Dorsolateral prefrontal cortex (tissue), 120 donors: ENCODE measurements at regions of chr9 and their contacts with region 1.

Region 1: DNA sequence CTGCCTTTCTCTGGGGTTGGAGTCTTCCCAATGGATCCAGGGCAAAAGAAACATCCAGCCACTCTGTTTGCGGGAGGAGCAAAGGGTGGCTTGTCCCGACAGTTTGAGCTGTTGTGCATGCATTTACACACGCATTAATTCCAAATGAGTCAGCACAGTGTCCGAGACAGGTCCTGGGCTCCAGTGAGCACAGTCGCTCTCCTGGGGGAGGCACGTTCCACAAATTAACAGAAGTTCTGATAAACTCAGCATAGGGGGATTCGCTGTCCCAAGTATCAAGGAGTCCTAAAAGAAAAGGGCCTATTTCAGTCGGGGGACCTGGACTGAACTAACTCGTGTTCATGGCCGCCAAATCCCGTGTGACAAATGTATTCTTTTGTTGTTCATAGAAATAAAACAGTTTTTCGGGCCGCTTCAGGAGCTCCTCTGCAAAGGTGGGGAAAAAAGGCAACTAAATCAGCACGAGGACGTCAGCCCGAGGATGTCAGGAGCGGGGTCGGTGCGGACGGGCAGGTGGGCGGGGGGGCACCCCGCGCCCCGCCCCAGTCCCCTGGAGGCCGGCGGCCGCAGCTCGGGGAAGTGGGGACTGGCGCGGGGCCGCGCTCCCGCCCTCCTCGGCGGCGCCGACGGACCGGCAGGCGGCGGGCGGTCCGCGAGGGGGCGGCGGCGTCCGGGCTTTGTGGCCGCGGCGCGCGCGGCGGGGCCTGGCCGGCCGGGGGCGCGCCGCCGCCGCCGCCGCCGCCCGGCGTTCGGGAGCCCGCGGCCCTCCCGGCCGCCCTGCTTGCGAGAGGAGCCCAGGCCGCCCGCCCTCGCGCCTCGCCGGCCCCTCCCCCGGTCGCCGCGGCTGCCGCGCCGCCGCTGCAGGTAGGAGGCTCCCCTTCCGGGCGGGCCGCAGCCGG is at the start of gene MSANTD3:
- DNase-seq: peak in 8 of 10 donors; percentile 34 to 73 (median 50)
- H3K4me3 ChIP-seq: peak within 1 kb of the TSS; percentile 68 to 92 (median 83)
- H3K27ac ChIP-seq: peak within 1 kb of the TSS; percentile 43 to 93 (median 87)
- H3K27me3 ChIP-seq: peaks cover 0 to under 1% (median 0%) of the 10 kb centered on the region in 45 donors
- CTCF ChIP-seq: peak in 20 of 56 donors; percentile 8 to 46 (median 18)
- total RNA-seq, gene MSANTD3: 19.8 to 52.0 (median 34.3) TPM

Region 2: GRCh38 chr9:100352727-100353505 is 73.9 kb before region 1 on chr9 and contains the start of gene TEX10:
- intact Hi-C with region 1: loop called (anchors 2 to 5 kb)
- DNase-seq: peak; percentile 78 to 93 (median 84)
- H3K4me3 ChIP-seq: peak within 1 kb of the TSS; percentile 62 to 99 (median 91)
- H3K27ac ChIP-seq: peak within 1 kb of the TSS in 58 of 59 donors; percentile 13 to 89 (median 77)
- H3K27me3 ChIP-seq: no peaks in the 10 kb centered on the region
- CTCF ChIP-seq: peak in 26 of 56 donors; percentile 9 to 48 (median 22)
- total RNA-seq, gene TEX10: 8.5 to 18.4 (median 13.1) TPM

Region 3: GRCh38 chr9:100411472-100412283 is 15.1 kb before region 1 on chr9:
- intact Hi-C with region 1: loop called in 1 of 2 experiments (anchors 1 kb)
- DNase-seq: peak; percentile 85 to 95 (median 92)
- H3K4me3 ChIP-seq: peak overlapping the region; percentile 39 to 81 (median 63)
- H3K27ac ChIP-seq: peak overlapping the region in 23 of 59 donors; percentile 2 to 72 (median 46)
- H3K27me3 ChIP-seq: peaks cover 0 to 2% (median 0%) of the 10 kb centered on the region in 45 donors
- CTCF ChIP-seq: peak in 30 of 56 donors; percentile 8 to 57 (median 32)

Region 4: DNA sequence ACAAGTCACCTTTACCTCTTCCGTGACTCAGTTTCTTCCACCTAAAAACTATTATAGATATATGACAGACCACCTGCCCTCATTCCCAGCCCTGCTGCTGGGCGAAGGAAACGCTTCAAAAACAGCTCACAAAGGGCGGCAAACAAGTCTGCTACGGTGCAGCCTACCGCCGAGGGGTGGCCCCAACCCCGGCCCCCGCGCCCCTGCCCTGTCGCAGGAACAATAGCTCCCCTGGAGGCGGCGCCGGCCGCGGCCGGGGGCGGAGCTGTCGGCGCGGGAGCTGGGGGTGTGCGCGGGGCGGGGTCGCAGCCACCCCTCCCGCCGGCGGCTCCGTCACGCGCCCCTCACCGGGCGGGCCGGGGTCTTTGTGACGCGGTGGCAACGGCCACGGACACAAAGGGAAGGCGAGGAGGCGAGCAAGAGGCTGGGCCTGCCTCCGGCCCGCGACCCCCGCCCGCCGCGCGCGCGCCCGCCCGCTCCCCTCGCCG is 46.1 kb after region 1 on chr9 and contains the start of gene TMEFF1:
- intact Hi-C with region 1: loop called (anchors 5 kb)
- DNase-seq: peak; percentile 30 to 83 (median 65)
- H3K4me3 ChIP-seq: peak within 1 kb of the TSS; percentile 45 to 99 (median 89)
- H3K27ac ChIP-seq: peak within 1 kb of the TSS; percentile 33 to 95 (median 85)
- H3K27me3 ChIP-seq: no peaks in the 10 kb centered on the region
- CTCF ChIP-seq: peak in 38 of 56 donors; percentile 9 to 56 (median 30)
- total RNA-seq, gene TMEFF1: 15.9 to 42.8 (median 25.6) TPM

Region 5: DNA sequence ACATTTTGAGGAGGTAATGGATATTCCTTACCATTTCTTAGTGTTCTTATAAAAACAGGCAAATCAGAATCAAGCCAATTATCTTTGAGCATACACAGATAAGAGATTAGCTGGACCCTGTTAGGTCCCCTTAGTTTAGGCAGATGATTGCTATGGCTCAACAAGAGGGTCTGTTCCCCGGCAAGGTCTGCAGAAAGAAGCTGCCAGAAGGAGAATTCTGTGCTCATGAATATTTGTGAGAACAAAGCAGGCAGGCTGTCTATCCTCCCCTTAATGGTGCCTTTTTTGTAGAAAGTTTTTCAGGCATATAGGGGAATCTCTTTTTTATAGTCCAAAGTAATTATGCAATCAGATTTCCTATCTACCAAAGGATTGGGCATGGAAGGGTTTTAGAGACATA is 178.6 kb after region 1 on chr9:
- intact Hi-C with region 1: no loop called
- DNase-seq: no peak
- H3K4me3 ChIP-seq: no peak overlapping the region
- H3K27ac ChIP-seq: no peak overlapping the region
- H3K27me3 ChIP-seq: no peaks in the 10 kb centered on the region
- CTCF ChIP-seq: no peak